GM12878 (cell line): ENCODE measurements at regions of chr6 and their contacts with region 1.

Region 1: GRCh38 chr6:45714741-45715507 is 300.7 kb downstream of the CLIC5 start:
- DNase-seq: peak; percentile 48
- ATAC-seq: peak; percentile 54
- H3K4me3 ChIP-seq: no peak overlapping the region
- H3K27ac ChIP-seq: no peak overlapping the region
- H3K4me1 ChIP-seq: peaks cover 16% of the 10 kb centered on the region
- H3K27me3 ChIP-seq: no peaks in the 10 kb centered on the region
- CTCF ChIP-seq: peak; percentile 61 to 89 (median 75)
- EP300 ChIP-seq: no peak
- POLR2A ChIP-seq: no peak
- RAD21 ChIP-seq: peak; percentile 93

Region 2: DNA sequence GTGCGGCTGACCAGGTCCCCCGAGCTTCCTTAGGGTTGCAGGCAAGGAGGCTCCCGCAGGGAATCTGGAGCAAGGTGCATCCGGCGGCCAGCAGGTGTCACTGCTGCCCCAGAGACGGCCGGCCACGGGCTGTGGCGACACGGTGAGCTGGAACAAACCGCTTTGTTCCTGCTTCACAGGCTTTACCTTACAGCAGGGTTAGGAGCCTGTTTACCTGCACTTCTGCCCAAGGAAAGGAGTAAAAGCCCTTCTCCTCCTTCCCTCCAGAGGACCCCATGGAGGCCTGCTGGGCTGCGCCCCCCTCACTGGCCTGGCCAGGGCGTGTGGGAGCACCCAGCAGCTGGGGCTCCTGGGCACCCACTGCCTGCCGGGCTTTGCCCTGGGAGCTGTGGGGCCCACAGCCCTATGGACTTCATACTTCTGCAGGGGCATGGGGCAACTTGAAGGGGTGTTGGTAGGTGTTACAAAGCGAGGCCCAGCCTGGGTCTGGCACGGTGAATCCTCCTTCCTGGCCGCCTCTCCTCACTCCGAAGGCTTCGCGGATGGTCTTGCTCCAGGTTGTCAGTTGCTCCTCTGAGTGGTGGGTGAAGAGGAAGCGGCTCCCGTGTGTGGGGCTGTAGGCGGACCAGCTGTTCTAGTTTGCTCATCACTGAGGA is 1239.0 kb before region 1 on chr6:
- CTCF ChIA-PET with region 1: interaction called, 14 read pairs
- POLR2A ChIA-PET with region 1: no interaction called
- RAD21 ChIA-PET with region 1: interaction called, 11 read pairs
- SMC1A ChIA-PET with region 1: interaction called, 12 read pairs
- in situ Hi-C with region 1: no loop called
- intact Hi-C with region 1: no loop called
- DNase-seq: no peak
- ATAC-seq: peak; percentile 97
- H3K4me3 ChIP-seq: no peak overlapping the region
- H3K27ac ChIP-seq: no peak overlapping the region
- H3K4me1 ChIP-seq: no peaks in the 10 kb centered on the region
- H3K27me3 ChIP-seq: no peaks in the 10 kb centered on the region; a peak in 3 of 4 replicates
- CTCF ChIP-seq: peak; percentile 84 to 95 (median 92)
- EP300 ChIP-seq: no peak
- POLR2A ChIP-seq: no peak
- RAD21 ChIP-seq: peak; percentile 81

Region 3: DNA sequence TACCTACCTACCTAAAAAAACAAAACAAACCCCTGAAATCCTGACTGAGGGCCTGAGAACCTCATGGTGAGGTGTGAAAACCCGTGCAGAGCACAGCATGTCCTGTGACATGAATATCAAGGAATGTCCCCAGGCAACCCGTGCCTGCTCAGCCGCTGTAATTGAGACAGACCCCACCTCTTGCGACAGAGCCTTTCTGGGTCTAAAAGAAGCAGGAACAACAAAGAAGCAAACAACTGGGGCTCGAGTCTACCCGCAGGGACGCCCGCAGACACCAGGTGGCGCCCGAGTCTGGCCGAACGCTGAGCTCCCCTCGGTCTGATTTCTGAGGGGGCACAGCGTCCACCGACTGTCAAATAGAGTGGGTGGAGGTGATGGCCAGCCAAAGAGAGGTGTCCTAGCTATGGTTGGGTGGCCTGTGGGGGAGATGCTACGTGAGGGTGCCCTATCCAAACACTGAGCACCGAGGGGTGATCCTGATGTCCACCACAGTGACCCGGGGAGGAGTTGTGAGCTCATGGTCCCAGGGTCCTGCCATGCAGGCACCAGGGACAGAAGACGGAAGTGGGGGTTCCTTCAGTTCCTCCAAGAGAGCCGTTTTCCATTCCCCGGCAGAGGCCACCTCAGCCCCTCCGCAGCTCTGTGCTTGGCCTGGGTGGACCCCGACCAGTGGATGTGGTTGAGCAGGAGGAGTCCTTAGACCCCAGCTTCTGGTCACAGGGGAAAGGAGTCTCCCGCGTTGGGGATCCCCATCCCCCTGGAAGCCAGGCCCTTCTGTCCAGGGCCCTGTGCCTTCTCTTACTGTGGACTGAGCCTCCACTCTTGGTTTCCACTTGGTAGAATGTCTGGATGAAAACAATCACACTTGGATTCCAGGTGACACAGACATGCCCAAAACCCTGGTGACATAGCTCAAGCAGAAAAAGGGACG is 1059.2 kb before region 1 on chr6:
- CTCF ChIA-PET with region 1: interaction called, 57 read pairs
- POLR2A ChIA-PET with region 1: no interaction called
- RAD21 ChIA-PET with region 1: interaction called, 34 read pairs
- SMC1A ChIA-PET with region 1: interaction called, 47 read pairs
- in situ Hi-C with region 1: loop called (anchors 5 kb)
- intact Hi-C with region 1: loop called (anchors 2 kb)
- DNase-seq: no peak
- ATAC-seq: peak; percentile 90
- H3K4me3 ChIP-seq: no peak overlapping the region
- H3K27ac ChIP-seq: no peak overlapping the region
- H3K4me1 ChIP-seq: no peaks in the 10 kb centered on the region; the same call in 1 of the 2 replicates
- H3K27me3 ChIP-seq: peaks cover 0 to 2% of the 10 kb centered on the region in 2 experiments; a peak in 1 of 4 replicates
- CTCF ChIP-seq: peak; percentile 90 to 92 (median 90)
- EP300 ChIP-seq: no peak
- POLR2A ChIP-seq: no peak
- RAD21 ChIP-seq: peak; percentile 92

Region 4: DNA sequence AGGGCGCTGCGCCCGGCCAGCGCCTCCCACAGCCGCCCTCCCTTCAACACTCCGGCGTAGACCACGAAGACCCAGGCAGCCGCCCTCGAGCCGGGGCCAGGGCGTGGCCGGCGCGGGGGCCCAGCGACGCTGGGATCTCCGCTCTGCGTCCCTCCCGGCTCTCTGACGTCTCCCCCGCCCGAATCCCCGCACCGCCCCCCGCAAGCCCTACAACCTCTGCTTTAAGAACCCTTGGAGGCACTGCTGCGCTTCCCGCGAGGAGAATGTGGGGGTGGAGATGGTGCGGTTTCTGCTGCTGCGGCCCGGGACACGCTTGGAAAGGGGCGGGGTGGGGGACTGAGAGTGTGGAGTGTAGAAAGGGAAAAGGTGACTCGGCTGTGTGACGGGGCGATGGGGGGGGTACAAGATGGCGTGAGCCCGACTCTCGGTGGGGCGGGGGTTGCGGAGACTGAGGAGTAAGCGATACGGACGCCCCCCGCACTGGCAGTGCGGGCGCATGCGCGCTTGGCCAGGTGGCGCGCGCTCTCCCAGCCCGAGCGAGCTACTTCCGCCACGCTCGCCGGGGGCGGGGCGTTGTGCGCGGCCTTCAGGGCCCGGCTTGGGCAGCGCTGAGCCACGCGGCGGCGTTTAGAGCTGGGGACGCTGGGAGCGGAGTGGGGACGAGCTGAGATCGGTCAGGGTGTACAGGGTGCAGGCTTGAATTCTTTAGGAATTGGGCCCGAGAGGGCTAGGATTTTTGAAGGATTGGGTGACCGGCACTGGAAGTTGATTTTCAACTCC is 337.2 kb before region 1 on chr6 and contains the start of gene SUPT3H:
- CTCF ChIA-PET with region 1: interaction called, 11 read pairs
- POLR2A ChIA-PET with region 1: no interaction called
- RAD21 ChIA-PET with region 1: interaction called, 16 read pairs
- SMC1A ChIA-PET with region 1: interaction called, 15 read pairs
- in situ Hi-C with region 1: no loop called
- intact Hi-C with region 1: loop called (anchors 10 kb)
- DNase-seq: peak; percentile 56
- ATAC-seq: peak; percentile 95
- H3K4me3 ChIP-seq: peak within 1 kb of the TSS; percentile 69
- H3K27ac ChIP-seq: peak within 1 kb of the TSS; percentile 80
- H3K4me1 ChIP-seq: no peaks in the 10 kb centered on the region; the same call in 1 of the 2 replicates
- H3K27me3 ChIP-seq: peaks cover 0 to 2% of the 10 kb centered on the region in 2 experiments; a peak in 1 of 4 replicates
- CTCF ChIP-seq: peak in 1 of 3 experiments; percentile 27; a peak in 1 of 6 replicates
- EP300 ChIP-seq: 0 out of 4 replicates have a peak, but pooled peaks of 1 of the 2 experiments have one; percentile 7
- POLR2A ChIP-seq: peak; percentile 79
- RAD21 ChIP-seq: no peak
- polyA plus RNA-seq, gene SUPT3H: 2.8 TPM

Region 5: GRCh38 chr6:45548657-45549515 is 166.0 kb before region 1 on chr6:
- CTCF ChIA-PET with region 1: no interaction called
- POLR2A ChIA-PET with region 1: no interaction called
- RAD21 ChIA-PET with region 1: no interaction called
- SMC1A ChIA-PET with region 1: interaction called, 3 read pairs
- in situ Hi-C with region 1: no loop called
- intact Hi-C with region 1: loop called (anchors 1 kb)
- DNase-seq: peak; percentile 75
- ATAC-seq: peak; percentile 98
- H3K4me3 ChIP-seq: no peak overlapping the region
- H3K27ac ChIP-seq: no peak overlapping the region
- H3K4me1 ChIP-seq: no peaks in the 10 kb centered on the region
- H3K27me3 ChIP-seq: peaks cover 0 to 2% of the 10 kb centered on the region in 2 experiments; a peak in 1 of 4 replicates
- CTCF ChIP-seq: 0 out of 6 replicates have a peak, but pooled peaks of 1 of the 3 experiments have one; percentile 1
- EP300 ChIP-seq: no peak; a peak in 1 of 4 replicates
- POLR2A ChIP-seq: no peak
- RAD21 ChIP-seq: no peak

Region 6: DNA sequence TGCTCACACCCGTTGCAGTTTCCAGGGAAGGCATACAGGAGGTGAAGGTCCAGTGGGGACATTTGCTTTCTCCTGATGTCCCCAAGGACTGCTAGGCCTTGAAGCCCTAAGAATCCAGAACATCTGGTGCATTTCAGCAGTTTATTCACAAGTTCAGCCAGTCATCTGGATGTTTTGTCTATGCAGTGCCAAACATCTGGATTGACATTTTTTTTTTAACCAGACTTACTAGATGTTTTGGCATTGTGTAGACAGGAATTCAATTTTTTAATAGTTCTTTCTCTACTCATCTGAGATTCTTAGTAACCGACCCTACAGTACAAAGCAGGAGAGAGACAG is 44.5 kb after region 1 on chr6:
- CTCF ChIA-PET with region 1: no interaction called
- POLR2A ChIA-PET with region 1: no interaction called
- RAD21 ChIA-PET with region 1: no interaction called
- SMC1A ChIA-PET with region 1: no interaction called
- in situ Hi-C with region 1: no loop called
- intact Hi-C with region 1: no loop called
- DNase-seq: no peak
- ATAC-seq: no peak
- H3K4me3 ChIP-seq: no peak overlapping the region
- H3K27ac ChIP-seq: no peak overlapping the region
- H3K4me1 ChIP-seq: no peaks in the 10 kb centered on the region
- H3K27me3 ChIP-seq: no peaks in the 10 kb centered on the region; a peak in 1 of 4 replicates
- CTCF ChIP-seq: no peak
- EP300 ChIP-seq: no peak
- POLR2A ChIP-seq: no peak
- RAD21 ChIP-seq: no peak

Region 7: GRCh38 chr6:45830441-45831139 is 115.7 kb after region 1 on chr6:
- CTCF ChIA-PET with region 1: interaction called, 3 read pairs
- POLR2A ChIA-PET with region 1: no interaction called
- RAD21 ChIA-PET with region 1: interaction called, 3 read pairs
- SMC1A ChIA-PET with region 1: interaction called, 6 read pairs
- in situ Hi-C with region 1: no loop called
- intact Hi-C with region 1: loop called (anchors 1 kb)
- DNase-seq: peak; percentile 86
- ATAC-seq: peak; percentile 95
- H3K4me3 ChIP-seq: peak overlapping the region; percentile 26; the same call in 1 of the 2 replicates
- H3K27ac ChIP-seq: 0 out of 2 replicates have a peak overlapping the region, but pooled peaks have one; percentile 11
- H3K4me1 ChIP-seq: peaks cover 24% of the 10 kb centered on the region
- H3K27me3 ChIP-seq: no peaks in the 10 kb centered on the region; a peak in 1 of 4 replicates
- CTCF ChIP-seq: no peak
- EP300 ChIP-seq: peak; percentile 83 to 97; a peak in 3 of 4 replicates
- POLR2A ChIP-seq: no peak
- RAD21 ChIP-seq: no peak